ENCODE measurements at regions of chr5 and their contacts with region 1.

Region 1: DNA sequence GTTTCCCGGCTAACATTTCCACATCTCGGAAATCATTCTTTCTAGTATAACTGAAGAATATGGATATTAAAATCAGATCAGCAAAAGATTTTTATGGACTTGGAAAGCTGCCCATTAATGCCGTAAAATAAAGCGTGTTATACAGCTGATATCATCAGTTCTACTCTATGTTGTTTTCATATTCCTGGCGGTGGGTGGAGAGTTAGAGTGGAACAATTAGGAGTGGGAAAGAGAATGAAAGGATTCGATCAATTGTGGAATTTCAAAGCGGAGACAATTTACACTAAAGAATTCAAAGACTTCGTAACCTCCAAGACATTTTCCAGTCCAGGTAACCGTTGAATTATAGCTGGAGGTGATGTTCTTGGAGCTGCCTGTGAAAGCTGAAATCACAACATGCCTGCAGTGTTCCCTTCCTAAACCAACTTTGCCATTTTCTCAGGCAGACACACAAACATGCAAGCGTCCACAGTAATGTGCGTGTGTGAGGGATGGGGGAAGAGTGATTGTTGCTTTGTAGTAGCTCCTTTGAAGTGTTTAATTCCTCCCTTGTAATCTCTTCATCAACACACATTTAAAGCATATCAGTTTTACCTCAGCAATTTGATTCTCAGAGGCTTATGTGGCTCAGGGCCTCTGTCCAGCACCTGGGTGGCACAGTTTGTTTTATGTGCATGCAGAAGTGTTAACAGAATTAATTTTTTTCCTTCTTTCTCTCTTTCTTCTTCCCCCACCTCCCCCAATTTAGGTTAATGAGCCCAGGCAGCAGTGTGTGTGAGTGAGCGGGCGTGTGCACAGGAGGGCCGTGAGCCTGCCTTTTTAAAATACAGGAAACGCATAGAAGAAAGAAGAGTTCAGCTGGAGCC is 544.1 kb downstream of the RAB3C start:
- DNase-seq: no peak
- H3K4me3 ChIP-seq: peak overlapping the region; percentile 49
- H3K4me3 Mint-ChIP-seq: no peak overlapping the region
- H3K27ac ChIP-seq: peak overlapping the region; percentile 49
- H3K27ac Mint-ChIP-seq: no peak overlapping the region
- H3K4me1 ChIP-seq: peaks cover 65% of the 10 kb centered on the region
- H3K4me1 Mint-ChIP-seq: peaks cover 6 to 13% (median 12%) of the 10 kb centered on the region in 3 donors
- H3K27me3 ChIP-seq: no peaks in the 10 kb centered on the region
- H3K27me3 Mint-ChIP-seq: no peaks in the 10 kb centered on the region

Region 2: GRCh38 chr5:59007460-59008063 is 119.4 kb before region 1 on chr5:
- CTCF ChIA-PET with region 1: no interaction called
- POLR2A ChIA-PET with region 1: no interaction called
- DNase-seq: no peak
- H3K4me3 ChIP-seq: no peak overlapping the region
- H3K4me3 Mint-ChIP-seq: peak overlapping the region in 1 of 7 donors; percentile 15
- H3K27ac ChIP-seq: no peak overlapping the region
- H3K27ac Mint-ChIP-seq: no peak overlapping the region
- H3K4me1 ChIP-seq: peaks cover 8% of the 10 kb centered on the region
- H3K4me1 Mint-ChIP-seq: peaks cover 40 to 79% (median 78%) of the 10 kb centered on the region in 3 donors
- H3K27me3 ChIP-seq: no peaks in the 10 kb centered on the region
- H3K27me3 Mint-ChIP-seq: no peaks in the 10 kb centered on the region

Region 3: GRCh38 chr5:59099270-59099994 is 27.5 kb before region 1 on chr5:
- CTCF ChIA-PET with region 1: interaction called, 8 read pairs
- POLR2A ChIA-PET with region 1: interaction called, 21 read pairs
- DNase-seq: peak; percentile 16 to 81 (median 25)
- H3K4me3 ChIP-seq: no peak overlapping the region
- H3K4me3 Mint-ChIP-seq: peak overlapping the region in 6 of 7 donors; percentile 1 to 64 (median 46)
- H3K27ac ChIP-seq: no peak overlapping the region
- H3K27ac Mint-ChIP-seq: peak overlapping the region; percentile 63 to 95 (median 86)
- H3K4me1 ChIP-seq: peaks cover 17% of the 10 kb centered on the region
- H3K4me1 Mint-ChIP-seq: peaks cover 27 to 48% (median 37%) of the 10 kb centered on the region in 3 donors
- H3K27me3 ChIP-seq: no peaks in the 10 kb centered on the region
- H3K27me3 Mint-ChIP-seq: peaks cover 0 to 3% of the 10 kb centered on the region in 2 donors